Activated CD8-positive, alpha-beta memory T cell treated with anti-CD3 and anti-CD28 coated beads, Interleukin-2, amount 10 ng/mL, durations not matched to agents 7 days and 5 days (primary cell): ENCODE measurements at regions of chr13 and their contacts with region 1.

Region 1: GRCh38 chr13:32581177-32581786 is 5.0 kb upstream of the PDS5B start:
- DNase-seq: no peak
- ATAC-seq: no peak
- H3K4me3 Mint-ChIP-seq: no peak overlapping the region
- H3K27ac Mint-ChIP-seq: no peak overlapping the region
- H3K4me1 Mint-ChIP-seq: peaks cover 10% of the 10 kb centered on the region
- H3K27me3 Mint-ChIP-seq: peaks cover 7% of the 10 kb centered on the region

Region 2: DNA sequence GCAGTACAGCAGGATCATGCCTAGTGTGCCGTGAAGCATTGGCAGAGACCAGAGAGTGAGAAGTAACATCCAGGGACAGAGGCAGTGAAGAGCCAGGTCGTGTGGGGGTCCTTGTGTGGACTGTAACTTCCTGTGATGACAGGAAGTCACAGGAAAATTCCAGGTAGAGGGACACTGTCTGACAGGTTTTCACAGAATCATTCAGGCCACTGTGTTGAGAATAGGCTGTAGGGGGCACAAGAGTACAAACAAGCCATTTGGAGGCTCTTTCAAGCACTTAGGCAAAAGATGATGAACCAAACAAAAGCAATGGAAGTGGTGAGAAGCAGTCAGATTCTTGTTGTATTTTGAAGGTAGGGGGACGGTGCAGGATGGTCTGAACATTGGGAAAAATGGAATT is 199.7 kb before region 1 on chr13:
- CTCF ChIA-PET with region 1: interaction called, 23 read pairs
- DNase-seq: peak; percentile 45
- ATAC-seq: peak; percentile 82
- H3K4me3 Mint-ChIP-seq: no peak overlapping the region
- H3K27ac Mint-ChIP-seq: no peak overlapping the region
- H3K4me1 Mint-ChIP-seq: no peaks in the 10 kb centered on the region
- H3K27me3 Mint-ChIP-seq: no peaks in the 10 kb centered on the region

Region 3: DNA sequence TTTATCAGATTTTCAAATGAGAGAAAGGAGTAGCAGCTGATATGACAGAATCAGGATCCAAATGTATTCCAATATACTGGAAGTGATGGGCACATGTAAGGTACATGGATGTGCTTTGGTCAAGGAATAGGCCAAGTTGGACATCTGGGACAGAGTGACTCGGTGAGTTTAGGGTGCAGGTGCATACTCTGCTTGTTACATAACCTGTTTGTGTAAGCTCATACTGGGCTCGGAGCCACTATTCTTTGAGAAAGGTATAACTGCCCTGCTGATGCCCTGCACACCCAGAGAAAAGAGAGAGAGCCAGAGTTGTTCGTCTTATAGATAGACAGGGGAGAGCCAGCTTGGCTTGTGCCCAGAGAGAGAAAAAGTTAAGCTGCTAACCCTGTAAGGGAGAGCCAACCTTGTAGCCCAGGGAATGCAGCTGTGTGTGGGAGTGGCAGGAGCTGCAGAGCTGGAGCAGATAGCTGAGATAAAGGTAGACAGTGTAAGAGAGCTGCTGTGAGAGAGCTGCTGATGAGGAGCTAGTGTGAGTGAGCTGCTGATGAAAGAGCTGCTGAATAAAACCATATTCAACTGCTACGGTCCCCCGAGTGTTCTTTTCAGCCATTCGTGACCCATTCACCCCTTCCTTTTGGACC is 112.7 kb before region 1 on chr13:
- CTCF ChIA-PET with region 1: interaction called, 22 read pairs
- DNase-seq: no peak
- ATAC-seq: no peak
- H3K4me3 Mint-ChIP-seq: no peak overlapping the region
- H3K27ac Mint-ChIP-seq: no peak overlapping the region
- H3K4me1 Mint-ChIP-seq: peaks cover 16% of the 10 kb centered on the region
- H3K27me3 Mint-ChIP-seq: no peaks in the 10 kb centered on the region